ENCODE measurements at regions of chr6 and their contacts with region 1.

Region 1: GRCh38 chr6:56899311-56899710 is 55.6 kb upstream of the BEND6 start:
- DNase-seq: no peak
- H3K4me3 ChIP-seq: no peak overlapping the region
- H3K4me1 ChIP-seq: no peaks in the 10 kb centered on the region
- H3K27me3 ChIP-seq: no peaks in the 10 kb centered on the region

Region 2: GRCh38 chr6:57316581-57317059 is 417.3 kb after region 1 on chr6:
- in situ Hi-C with region 1: loop called (anchors 5 kb)
- DNase-seq: peak; percentile 86 to 88
- H3K4me3 ChIP-seq: peak overlapping the region; percentile 60
- H3K4me1 ChIP-seq: peaks cover 8% of the 10 kb centered on the region
- H3K27me3 ChIP-seq: no peaks in the 10 kb centered on the region